ENCODE measurements at regions of chr14 and their contacts with region 1.

Region 1: DNA sequence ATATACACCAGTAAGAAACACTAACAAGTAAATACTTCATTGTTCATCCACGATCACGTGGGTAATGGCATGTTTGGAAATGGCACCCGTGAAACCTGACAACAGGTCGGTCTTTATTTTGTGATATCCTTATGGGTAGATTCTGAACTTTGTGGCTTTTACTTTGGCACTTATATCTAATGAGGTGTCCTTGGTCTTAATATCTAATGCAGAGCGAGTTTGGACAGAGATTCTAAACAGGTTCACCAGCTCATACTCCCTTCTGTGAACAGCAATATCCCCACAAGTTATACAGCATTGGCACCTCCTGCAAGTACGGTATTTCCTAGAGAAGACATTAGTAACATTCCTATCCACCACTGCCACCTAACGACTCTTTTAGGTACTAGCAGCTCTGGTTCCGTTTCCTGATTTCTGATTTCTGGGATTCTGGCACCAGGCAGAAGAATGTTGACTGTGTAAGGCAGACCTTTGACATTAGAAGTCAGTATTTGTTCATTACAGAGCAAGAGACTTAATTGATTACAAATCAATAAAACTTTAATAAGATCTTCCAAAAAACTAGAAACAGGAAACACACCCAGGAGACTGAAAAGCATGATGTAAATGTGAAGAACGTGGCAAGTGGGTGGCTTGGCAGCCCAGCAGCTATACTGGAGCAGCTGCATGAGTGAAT is 2.4 kb downstream of the ANG start:
- DNase-seq: peak; percentile 44
- ATAC-seq: peak; percentile 95
- H3K4me3 ChIP-seq: no peak overlapping the region
- H3K27ac ChIP-seq: no peak overlapping the region
- H3K4me1 ChIP-seq: no peaks in the 10 kb centered on the region
- H3K27me3 ChIP-seq: no peaks in the 10 kb centered on the region
- CTCF ChIP-seq: peak; percentile 80 to 94 (median 82)
- EP300 ChIP-seq: no peak
- POLR2A ChIP-seq: no peak
- RAD21 ChIP-seq: peak; percentile 94

Region 2: GRCh38 chr14:20530771-20531571 is 160.0 kb before region 1 on chr14:
- CTCF ChIA-PET with region 1: interaction called, 13 read pairs
- POLR2A ChIA-PET with region 1: no interaction called
- RAD21 ChIA-PET with region 1: interaction called, 4 read pairs
- SMC1A ChIA-PET with region 1: interaction called, 7 read pairs
- in situ Hi-C with region 1: loop called (anchors 5 kb)
- intact Hi-C with region 1: loop called (anchors 1 kb)
- DNase-seq: peak; percentile 21
- ATAC-seq: peak; percentile 98
- H3K4me3 ChIP-seq: no peak overlapping the region
- H3K27ac ChIP-seq: no peak overlapping the region
- H3K4me1 ChIP-seq: no peaks in the 10 kb centered on the region
- H3K27me3 ChIP-seq: no peaks in the 10 kb centered on the region
- CTCF ChIP-seq: peak; percentile 65 to 75 (median 73)
- EP300 ChIP-seq: no peak
- POLR2A ChIP-seq: no peak
- RAD21 ChIP-seq: peak; percentile 66

Region 3: GRCh38 chr14:20559461-20559904 is 131.5 kb before region 1 on chr14:
- CTCF ChIA-PET with region 1: no interaction called
- POLR2A ChIA-PET with region 1: no interaction called
- RAD21 ChIA-PET with region 1: no interaction called
- SMC1A ChIA-PET with region 1: no interaction called
- in situ Hi-C with region 1: no loop called
- intact Hi-C with region 1: no loop called
- DNase-seq: no peak
- ATAC-seq: no peak
- H3K4me3 ChIP-seq: no peak overlapping the region
- H3K27ac ChIP-seq: no peak overlapping the region
- H3K4me1 ChIP-seq: no peaks in the 10 kb centered on the region
- H3K27me3 ChIP-seq: no peaks in the 10 kb centered on the region
- CTCF ChIP-seq: no peak
- EP300 ChIP-seq: no peak
- POLR2A ChIP-seq: no peak
- RAD21 ChIP-seq: no peak

Region 4: DNA sequence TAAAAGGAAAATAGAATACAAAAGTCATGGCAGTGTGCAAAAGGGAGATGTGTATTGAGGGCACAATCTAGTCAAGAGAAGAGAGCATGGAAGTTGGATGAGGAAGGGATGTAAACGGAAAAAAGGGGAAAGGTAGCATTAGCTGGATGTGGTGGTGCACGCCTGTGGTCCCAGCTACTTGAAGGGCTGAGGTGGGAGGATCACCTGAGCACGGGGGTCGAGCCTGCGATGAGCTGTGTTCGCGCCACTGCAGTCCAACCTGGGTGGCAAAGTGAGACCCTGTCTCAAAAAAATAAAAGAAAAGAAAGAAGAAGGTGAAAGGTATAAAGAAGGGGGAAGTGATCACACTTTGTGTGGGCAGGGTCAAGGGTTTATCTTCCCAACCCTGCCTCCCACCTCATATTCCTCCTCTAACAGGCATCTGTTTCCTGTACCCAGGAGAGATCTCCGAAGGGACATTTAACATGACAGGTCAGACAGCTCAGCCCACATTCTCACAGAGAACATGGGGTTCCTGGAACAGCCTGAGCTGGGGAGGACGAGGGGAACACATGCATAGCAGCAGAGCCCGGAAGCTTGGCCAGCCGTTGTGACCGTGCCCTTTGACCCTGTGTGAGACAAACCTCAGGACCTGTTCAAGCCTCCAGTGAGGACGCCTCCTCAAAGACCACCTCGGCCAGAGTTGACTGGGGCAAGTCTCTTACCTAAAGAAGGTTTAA is 112.0 kb before region 1 on chr14:
- CTCF ChIA-PET with region 1: no interaction called
- POLR2A ChIA-PET with region 1: no interaction called
- RAD21 ChIA-PET with region 1: no interaction called
- SMC1A ChIA-PET with region 1: no interaction called
- in situ Hi-C with region 1: no loop called
- intact Hi-C with region 1: no loop called
- DNase-seq: no peak
- ATAC-seq: no peak
- H3K4me3 ChIP-seq: no peak overlapping the region
- H3K27ac ChIP-seq: no peak overlapping the region
- H3K4me1 ChIP-seq: no peaks in the 10 kb centered on the region
- H3K27me3 ChIP-seq: no peaks in the 10 kb centered on the region; a peak in 1 of 4 replicates
- CTCF ChIP-seq: no peak
- EP300 ChIP-seq: no peak
- POLR2A ChIP-seq: no peak
- RAD21 ChIP-seq: no peak

Region 5: GRCh38 chr14:20632682-20633428 is 58.1 kb before region 1 on chr14:
- CTCF ChIA-PET with region 1: interaction called, 6 read pairs
- POLR2A ChIA-PET with region 1: interaction called, 3 read pairs
- RAD21 ChIA-PET with region 1: interaction called, 4 read pairs
- SMC1A ChIA-PET with region 1: interaction called, 11 read pairs
- in situ Hi-C with region 1: no loop called
- intact Hi-C with region 1: no loop called
- DNase-seq: peak; percentile 76
- ATAC-seq: peak; percentile 77
- H3K4me3 ChIP-seq: peak overlapping the region; percentile 88; the same call in 1 of the 2 replicates
- H3K27ac ChIP-seq: no peak overlapping the region
- H3K4me1 ChIP-seq: peaks cover 7% of the 10 kb centered on the region; the same call in 1 of the 2 replicates
- H3K27me3 ChIP-seq: peaks cover 0 to 2% of the 10 kb centered on the region in 2 experiments; a peak in 1 of 4 replicates
- CTCF ChIP-seq: no peak
- EP300 ChIP-seq: peak in 1 of 2 experiments; percentile 44; a peak in 1 of 4 replicates
- POLR2A ChIP-seq: no peak
- RAD21 ChIP-seq: no peak

Region 6: GRCh38 chr14:20657216-20658128 is 33.5 kb before region 1 on chr14:
- CTCF ChIA-PET with region 1: interaction called, 214 read pairs
- POLR2A ChIA-PET with region 1: no interaction called
- RAD21 ChIA-PET with region 1: interaction called, 156 read pairs
- SMC1A ChIA-PET with region 1: interaction called, 150 read pairs
- in situ Hi-C with region 1: no loop called
- intact Hi-C with region 1: no loop called
- DNase-seq: no peak
- ATAC-seq: peak; percentile 72
- H3K4me3 ChIP-seq: no peak overlapping the region
- H3K27ac ChIP-seq: no peak overlapping the region
- H3K4me1 ChIP-seq: no peaks in the 10 kb centered on the region; the same call in 1 of the 2 replicates
- H3K27me3 ChIP-seq: no peaks in the 10 kb centered on the region; a peak in 2 of 4 replicates
- CTCF ChIP-seq: peak in 2 of 3 experiments; percentile 24 to 27; a peak in 3 of 6 replicates
- EP300 ChIP-seq: no peak
- POLR2A ChIP-seq: no peak; the same call in 1 of the 2 replicates
- RAD21 ChIP-seq: no peak

Region 7: GRCh38 chr14:20662968-20663732 is 27.8 kb before region 1 on chr14:
- CTCF ChIA-PET with region 1: interaction called, 214 read pairs
- POLR2A ChIA-PET with region 1: no interaction called
- RAD21 ChIA-PET with region 1: interaction called, 156 read pairs
- SMC1A ChIA-PET with region 1: interaction called, 150 read pairs
- in situ Hi-C with region 1: no loop called
- intact Hi-C with region 1: loop called (anchors 1 kb)
- DNase-seq: peak; percentile 88
- ATAC-seq: peak; percentile 73
- H3K4me3 ChIP-seq: peak overlapping the region; percentile 83
- H3K27ac ChIP-seq: peak overlapping the region; percentile 20; the same call in 1 of the 2 replicates
- H3K4me1 ChIP-seq: peaks cover 20% of the 10 kb centered on the region
- H3K27me3 ChIP-seq: no peaks in the 10 kb centered on the region
- CTCF ChIP-seq: peak; percentile 72 to 84 (median 77)
- EP300 ChIP-seq: peak in 1 of 2 experiments; percentile 45; a peak in 1 of 4 replicates
- POLR2A ChIP-seq: 0 out of 2 replicates have a peak, but pooled peaks have one; percentile 32
- RAD21 ChIP-seq: peak; percentile 75

Measured in GM12878 (cell line).